Activated CD8-positive, alpha-beta T cell treated with anti-CD3 and anti-CD28 coated beads for 36 hours (primary cell): ENCODE measurements at regions of chr7 and their contacts with region 1.

Region 1: GRCh38 chr7:8022628-8023027 is 54.0 kb downstream of the GLCCI1 start:
- DNase-seq: no peak
- ATAC-seq: no peak
- H3K4me3 Mint-ChIP-seq: no peak overlapping the region
- H3K27ac Mint-ChIP-seq: no peak overlapping the region
- H3K4me1 Mint-ChIP-seq: peaks cover 7% of the 10 kb centered on the region
- H3K27me3 Mint-ChIP-seq: no peaks in the 10 kb centered on the region
- CTCF ChIP-seq: no peak

Region 2: DNA sequence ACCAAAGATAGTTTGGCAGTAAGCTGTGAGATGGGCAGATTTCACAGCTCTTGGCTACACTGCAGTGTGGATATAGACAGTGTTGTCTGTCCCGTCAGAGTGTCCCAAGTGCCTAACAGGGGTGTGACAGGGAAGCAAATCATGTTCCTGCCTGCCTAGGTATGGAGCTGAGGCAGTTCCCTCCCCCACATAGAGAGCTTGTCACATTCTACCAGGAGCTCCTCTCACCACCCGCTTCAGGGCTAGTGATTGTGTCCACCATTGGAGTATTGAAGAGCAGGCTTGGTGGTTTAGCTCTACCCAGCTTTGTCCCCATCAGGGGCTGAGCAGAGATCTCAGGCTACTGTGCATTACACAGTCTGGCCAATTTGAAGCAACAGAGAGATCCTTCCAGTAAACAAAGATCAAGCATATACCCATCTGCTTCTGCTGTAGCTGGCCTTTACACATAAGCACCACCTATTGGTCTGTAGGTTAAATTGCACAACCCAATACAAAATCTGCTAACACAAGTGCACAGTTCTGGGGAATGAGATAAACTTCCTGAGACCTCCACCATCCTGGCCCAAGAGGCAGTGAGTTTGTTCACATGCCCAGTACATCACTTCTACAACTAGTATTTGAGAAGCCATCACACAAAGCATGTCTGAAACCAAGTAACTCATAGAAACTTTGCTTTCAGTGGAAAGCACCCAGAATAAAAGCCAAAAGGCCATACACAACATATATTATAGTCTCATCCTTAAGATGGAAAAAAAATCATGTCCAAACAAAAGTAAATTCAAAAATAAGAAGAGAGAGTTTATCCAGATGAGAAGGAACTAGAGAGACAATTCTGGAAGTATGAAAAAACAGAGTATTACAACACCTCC is 13.3 kb after region 1 on chr7:
- CTCF ChIA-PET with region 1: interaction called, 13 read pairs
- POLR2A ChIA-PET with region 1: interaction called, 4 read pairs
- intact Hi-C with region 1: no loop called
- DNase-seq: no peak
- ATAC-seq: peak; percentile 86
- H3K4me3 Mint-ChIP-seq: no peak overlapping the region
- H3K27ac Mint-ChIP-seq: peak overlapping the region; percentile 27
- H3K4me1 Mint-ChIP-seq: peaks cover 20% of the 10 kb centered on the region
- H3K27me3 Mint-ChIP-seq: no peaks in the 10 kb centered on the region
- CTCF ChIP-seq: peak; percentile 18

Region 3: DNA sequence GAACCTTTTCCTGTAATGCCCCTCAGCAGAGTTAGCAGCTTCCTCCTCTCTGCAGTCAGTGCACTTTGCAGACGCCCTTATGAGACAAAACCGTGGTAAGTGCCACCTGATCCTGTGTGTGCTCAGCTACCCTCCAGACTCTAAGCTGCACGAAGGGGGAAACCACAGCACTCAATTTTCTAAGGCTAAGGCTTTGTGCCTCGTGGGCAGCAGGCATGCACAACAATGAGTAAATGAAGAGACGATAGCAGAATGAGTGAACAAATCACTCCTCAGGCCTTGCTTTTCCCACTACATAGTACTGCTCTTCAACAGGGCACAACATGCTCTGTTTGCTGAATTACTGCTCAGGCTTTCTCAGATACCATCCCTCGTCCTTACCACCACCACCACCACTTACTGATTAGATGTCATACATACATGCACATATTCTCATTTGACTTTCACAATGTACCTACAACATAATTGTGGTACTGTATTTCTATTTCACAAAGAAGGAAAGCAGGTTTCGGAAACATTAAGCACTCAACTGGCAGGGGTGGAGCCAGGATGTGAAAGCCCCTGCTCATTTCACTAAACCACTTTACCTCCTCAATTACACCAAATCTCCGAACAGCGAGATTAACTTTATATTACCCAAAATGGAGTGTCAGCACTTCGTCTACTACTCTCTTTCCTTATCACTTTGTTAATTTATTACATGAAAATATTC is 153.9 kb after region 1 on chr7:
- CTCF ChIA-PET with region 1: no interaction called
- POLR2A ChIA-PET with region 1: no interaction called
- intact Hi-C with region 1: no loop called
- DNase-seq: peak; percentile 81
- ATAC-seq: peak; percentile 88
- H3K4me3 Mint-ChIP-seq: peak overlapping the region; percentile 65
- H3K27ac Mint-ChIP-seq: peak overlapping the region; percentile 95
- H3K4me1 Mint-ChIP-seq: peaks cover 55% of the 10 kb centered on the region
- H3K27me3 Mint-ChIP-seq: no peaks in the 10 kb centered on the region
- CTCF ChIP-seq: no peak